Activated naive CD8-positive, alpha-beta T cell treated with anti-CD3 and anti-CD28 coated beads, Interleukin-2, amount 10 ng/mL, durations not matched to agents 7 days and 5 days (primary cell): ENCODE measurements at regions of chr13 and their contacts with region 1.

Region 1: GRCh38 chr13:99436686-99437416 is 64.4 kb upstream of the TM9SF2 start:
- DNase-seq: peak; percentile 95
- ATAC-seq: peak; percentile 57
- H3K4me3 Mint-ChIP-seq: peak overlapping the region; percentile 66
- H3K27ac Mint-ChIP-seq: peak overlapping the region; percentile 62
- H3K4me1 Mint-ChIP-seq: peaks cover 51% of the 10 kb centered on the region
- H3K27me3 Mint-ChIP-seq: peaks cover 14% of the 10 kb centered on the region

Region 2: GRCh38 chr13:99380921-99381645 is 55.8 kb before region 1 on chr13:
- POLR2A ChIA-PET with region 1: interaction called, 18 read pairs
- DNase-seq: peak; percentile 59
- ATAC-seq: peak; percentile 73
- H3K4me3 Mint-ChIP-seq: peak overlapping the region; percentile 62
- H3K27ac Mint-ChIP-seq: peak overlapping the region; percentile 88
- H3K4me1 Mint-ChIP-seq: peaks cover 70% of the 10 kb centered on the region
- H3K27me3 Mint-ChIP-seq: no peaks in the 10 kb centered on the region

Region 3: DNA sequence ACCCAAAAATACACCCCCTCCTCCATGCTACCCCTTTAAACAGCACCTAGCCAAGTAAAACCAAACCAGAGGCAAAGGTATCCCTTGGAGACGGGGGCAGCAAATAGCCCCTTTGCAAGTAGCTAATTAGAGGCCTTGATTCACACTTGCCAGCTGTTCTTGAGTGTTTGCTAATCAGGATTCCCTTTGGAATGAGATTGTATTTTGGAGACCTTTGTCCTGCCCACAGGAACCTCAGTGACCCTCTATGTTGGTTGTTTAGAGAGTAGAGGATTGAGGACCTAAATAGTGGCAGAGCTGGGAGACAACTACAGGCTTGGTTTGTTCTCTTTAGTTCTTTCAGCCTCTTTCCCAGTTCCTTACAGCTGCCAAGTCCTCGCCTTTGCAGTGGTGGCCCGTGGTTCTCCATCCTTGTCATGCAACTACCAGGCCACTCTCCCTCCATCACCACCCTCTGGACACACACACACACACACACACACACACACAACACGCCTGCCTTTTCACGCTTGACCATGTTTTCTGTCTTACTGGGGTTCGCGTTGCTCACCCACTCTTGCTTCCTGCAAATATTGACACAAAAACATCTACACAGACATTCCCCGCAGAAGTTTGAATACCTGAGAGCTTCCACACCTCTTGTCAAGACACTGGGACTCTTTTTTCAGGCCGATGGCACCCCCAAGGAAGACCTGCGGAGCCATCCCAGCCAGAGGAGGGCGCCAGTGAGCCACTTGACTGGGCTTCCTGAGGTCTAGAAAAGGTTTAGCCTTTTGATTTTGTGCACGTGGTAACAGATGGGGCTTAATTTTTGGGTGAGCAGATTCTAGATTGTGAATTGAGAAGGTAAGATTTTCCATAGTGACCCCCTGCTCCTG is 49.7 kb before region 1 on chr13:
- POLR2A ChIA-PET with region 1: interaction called, 12 read pairs
- DNase-seq: peak; percentile 92
- ATAC-seq: peak; percentile 46
- H3K4me3 Mint-ChIP-seq: no peak overlapping the region
- H3K27ac Mint-ChIP-seq: peak overlapping the region; percentile 63
- H3K4me1 Mint-ChIP-seq: peaks cover 45% of the 10 kb centered on the region
- H3K27me3 Mint-ChIP-seq: no peaks in the 10 kb centered on the region

Region 4: GRCh38 chr13:99406799-99407201 is 30.1 kb before region 1 on chr13:
- POLR2A ChIA-PET with region 1: no interaction called
- DNase-seq: no peak
- ATAC-seq: no peak
- H3K4me3 Mint-ChIP-seq: no peak overlapping the region
- H3K27ac Mint-ChIP-seq: peak overlapping the region; percentile 2
- H3K4me1 Mint-ChIP-seq: peaks cover 8% of the 10 kb centered on the region
- H3K27me3 Mint-ChIP-seq: peaks cover 3% of the 10 kb centered on the region

Region 5: DNA sequence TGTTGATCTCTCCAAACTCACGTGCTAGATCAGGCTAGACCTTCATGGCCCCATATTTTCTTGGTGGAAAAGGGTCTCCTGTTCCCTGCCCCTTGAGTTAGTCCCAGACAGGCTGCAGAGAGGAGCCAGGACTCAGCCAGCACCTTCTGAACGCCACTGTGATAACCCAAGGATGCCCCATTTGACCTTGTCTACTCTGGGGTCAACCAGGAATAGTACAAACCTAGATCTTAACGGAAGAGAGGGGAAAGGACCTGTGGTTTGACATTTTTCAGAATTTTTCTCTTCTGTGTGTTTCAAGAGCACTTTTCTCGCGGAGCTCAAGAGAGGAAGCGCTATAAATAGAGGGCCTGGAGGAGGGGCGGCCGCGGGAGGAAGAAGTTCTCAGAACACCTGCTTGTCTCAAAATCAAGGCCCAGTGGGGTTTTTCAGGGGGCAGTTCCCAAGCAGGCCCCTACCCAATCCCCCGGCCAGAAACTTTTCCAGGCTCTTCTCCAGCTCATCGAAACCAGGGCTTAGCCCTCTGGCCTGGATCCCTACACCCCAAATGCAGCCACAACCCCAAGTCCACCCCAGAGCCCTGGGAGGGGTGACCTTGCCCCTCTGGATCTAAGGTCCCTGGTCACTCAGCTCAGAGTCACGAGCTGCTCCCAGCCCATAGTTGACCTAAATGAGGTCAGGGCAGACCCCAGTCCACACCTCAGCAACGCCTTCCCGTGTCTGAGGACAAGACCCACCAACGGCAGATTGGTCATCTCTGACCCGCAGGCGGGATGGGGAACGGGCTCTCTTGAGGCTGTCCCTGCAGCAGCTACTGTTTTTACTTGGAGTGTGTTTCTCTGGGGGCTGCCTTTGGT is 11.1 kb before region 1 on chr13:
- POLR2A ChIA-PET with region 1: interaction called, 12 read pairs
- DNase-seq: peak; percentile 71
- ATAC-seq: peak; percentile 78
- H3K4me3 Mint-ChIP-seq: peak overlapping the region; percentile 79
- H3K27ac Mint-ChIP-seq: peak overlapping the region; percentile 95
- H3K4me1 Mint-ChIP-seq: peaks cover 48% of the 10 kb centered on the region
- H3K27me3 Mint-ChIP-seq: no peaks in the 10 kb centered on the region

Region 6: GRCh38 chr13:99448546-99448945 is 11.7 kb after region 1 on chr13:
- POLR2A ChIA-PET with region 1: no interaction called
- DNase-seq: no peak
- ATAC-seq: no peak
- H3K4me3 Mint-ChIP-seq: no peak overlapping the region
- H3K27ac Mint-ChIP-seq: no peak overlapping the region
- H3K4me1 Mint-ChIP-seq: no peaks in the 10 kb centered on the region
- H3K27me3 Mint-ChIP-seq: peaks cover 14% of the 10 kb centered on the region